SK-N-SH (cell line): ENCODE measurements at regions of chr20 and their contacts with region 1.

Region 1: DNA sequence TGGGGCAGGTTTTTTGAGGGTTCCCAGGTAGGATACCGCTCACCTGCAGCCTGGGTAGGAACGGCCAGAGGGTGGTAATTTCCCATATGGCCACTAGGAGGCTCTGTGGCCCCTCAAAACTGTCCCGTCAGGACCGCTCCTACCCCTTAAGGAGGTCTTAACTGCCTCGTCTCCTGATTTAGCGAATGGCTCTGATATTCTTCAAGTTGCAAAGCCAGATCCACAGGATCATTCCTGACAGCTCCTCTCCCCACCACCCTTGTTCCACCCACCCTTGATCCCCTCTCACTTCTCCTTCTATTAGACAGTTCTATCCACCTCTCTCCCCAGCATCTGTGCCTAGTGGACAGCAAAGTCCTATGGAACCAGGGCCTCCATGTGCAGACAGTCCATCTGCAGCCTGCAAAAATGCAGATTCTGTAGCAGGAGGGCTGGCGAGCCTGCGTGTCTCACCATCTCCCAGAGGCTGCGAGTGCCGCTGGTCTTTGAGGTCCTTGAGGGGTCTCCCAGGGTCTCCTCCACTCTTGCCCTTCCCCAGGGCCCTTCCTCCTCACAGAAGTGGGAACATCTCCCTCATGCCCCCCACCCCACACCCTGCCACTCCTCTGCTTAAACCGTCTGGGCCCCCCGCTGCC is 34.3 kb upstream of the ZBP1 start:
- DNase-seq: peak; percentile 93
- H3K4me3 ChIP-seq: no peak overlapping the region; a peak in 1 of 4 replicates
- H3K27ac ChIP-seq: peak overlapping the region in 1 of 2 experiments; percentile 17; a peak in 2 of 4 replicates
- H3K4me1 ChIP-seq: peaks cover 0 to 16% of the 10 kb centered on the region in 2 experiments; a peak in 1 of 4 replicates
- H3K27me3 ChIP-seq: no peaks in the 10 kb centered on the region
- CTCF ChIP-seq: peak; percentile 93
- EP300 ChIP-seq: no peak
- RAD21 ChIP-seq: peak; percentile 92

Region 2: DNA sequence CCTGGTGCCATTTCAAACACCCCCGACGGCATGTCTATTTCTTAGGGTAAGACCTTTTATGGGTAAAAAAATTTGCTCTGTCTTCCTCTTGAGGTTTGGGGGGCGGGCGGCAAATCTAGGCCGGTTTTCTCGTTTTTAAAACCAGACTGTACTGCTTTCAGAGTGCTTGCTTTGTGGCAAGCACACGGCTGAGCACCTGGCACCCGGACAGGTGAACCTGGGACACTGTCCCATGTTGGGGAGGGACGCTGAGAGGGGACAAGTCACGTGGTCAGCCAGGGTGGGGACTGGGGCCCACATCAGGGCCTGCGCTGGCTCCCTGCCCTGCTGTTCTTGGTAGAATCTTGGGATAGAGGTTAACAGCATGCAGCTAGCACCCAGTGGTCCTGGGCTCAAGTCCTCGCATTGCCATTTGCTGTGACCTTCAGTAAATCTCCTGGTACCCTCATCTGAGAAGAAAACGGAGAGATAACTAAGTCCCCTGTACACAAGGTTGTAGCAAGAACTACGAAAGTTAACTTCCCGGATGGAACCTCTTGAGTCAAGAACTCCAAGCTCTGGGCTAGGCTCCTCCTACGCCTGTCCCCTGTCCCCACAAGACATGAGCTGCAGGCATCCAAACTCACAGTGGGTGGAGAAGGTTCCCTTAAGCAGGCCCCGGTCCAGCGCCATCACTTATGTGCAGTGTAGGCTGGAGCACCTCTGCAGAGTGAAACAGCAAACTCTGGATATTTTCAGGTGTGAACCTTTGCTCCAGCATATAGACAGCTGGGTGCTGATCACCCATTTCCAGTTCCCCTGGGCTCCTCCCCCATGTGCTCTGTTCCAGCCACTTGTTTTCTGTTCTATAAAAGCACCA is 13.7 kb after region 1 on chr20:
- CTCF ChIA-PET with region 1: interaction called, 14 read pairs
- POLR2A ChIA-PET with region 1: no interaction called
- DNase-seq: no peak
- H3K4me3 ChIP-seq: no peak overlapping the region
- H3K27ac ChIP-seq: peak overlapping the region in 1 of 2 experiments; percentile 91; a peak in 2 of 4 replicates
- H3K4me1 ChIP-seq: peaks cover 0 to 79% of the 10 kb centered on the region in 2 experiments; a peak in 2 of 4 replicates
- H3K27me3 ChIP-seq: no peaks in the 10 kb centered on the region
- CTCF ChIP-seq: no peak
- EP300 ChIP-seq: no peak
- RAD21 ChIP-seq: no peak

Region 3: DNA sequence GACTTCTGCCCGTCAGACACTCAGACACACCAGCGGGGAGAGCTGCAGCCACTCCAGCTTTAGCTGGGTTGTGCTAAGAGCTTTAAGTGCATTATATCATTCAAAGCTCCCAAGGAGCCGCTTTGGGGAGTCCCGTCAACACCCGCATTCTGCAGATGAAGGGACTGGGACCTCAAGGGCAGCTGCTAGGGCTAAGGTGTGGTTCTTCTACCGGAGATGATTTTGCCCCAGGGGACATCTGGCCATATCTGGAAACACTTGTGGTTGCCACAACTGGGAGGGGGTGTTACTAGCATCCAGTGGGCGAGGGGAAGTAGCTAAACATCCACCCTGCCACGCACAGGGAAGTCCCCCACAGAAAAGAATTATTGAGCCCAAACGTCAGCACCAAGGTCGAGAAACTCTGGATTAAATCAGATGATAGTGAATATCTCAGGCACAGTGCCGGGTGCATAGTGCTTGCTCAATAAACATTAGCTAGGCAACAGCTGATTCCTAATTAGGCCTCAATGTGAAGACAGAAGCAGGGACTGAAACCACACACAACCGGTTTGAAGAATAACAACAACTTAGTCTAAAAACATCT is 25.7 kb after region 1 on chr20:
- CTCF ChIA-PET with region 1: interaction called, 19 read pairs
- POLR2A ChIA-PET with region 1: no interaction called
- DNase-seq: no peak
- H3K4me3 ChIP-seq: no peak overlapping the region
- H3K27ac ChIP-seq: peak overlapping the region in 1 of 2 experiments; percentile 94; a peak in 2 of 4 replicates
- H3K4me1 ChIP-seq: peaks cover 7 to 98% of the 10 kb centered on the region in 2 experiments; a peak in 2 of 4 replicates
- H3K27me3 ChIP-seq: no peaks in the 10 kb centered on the region
- CTCF ChIP-seq: no peak
- EP300 ChIP-seq: no peak
- RAD21 ChIP-seq: no peak

Region 4: DNA sequence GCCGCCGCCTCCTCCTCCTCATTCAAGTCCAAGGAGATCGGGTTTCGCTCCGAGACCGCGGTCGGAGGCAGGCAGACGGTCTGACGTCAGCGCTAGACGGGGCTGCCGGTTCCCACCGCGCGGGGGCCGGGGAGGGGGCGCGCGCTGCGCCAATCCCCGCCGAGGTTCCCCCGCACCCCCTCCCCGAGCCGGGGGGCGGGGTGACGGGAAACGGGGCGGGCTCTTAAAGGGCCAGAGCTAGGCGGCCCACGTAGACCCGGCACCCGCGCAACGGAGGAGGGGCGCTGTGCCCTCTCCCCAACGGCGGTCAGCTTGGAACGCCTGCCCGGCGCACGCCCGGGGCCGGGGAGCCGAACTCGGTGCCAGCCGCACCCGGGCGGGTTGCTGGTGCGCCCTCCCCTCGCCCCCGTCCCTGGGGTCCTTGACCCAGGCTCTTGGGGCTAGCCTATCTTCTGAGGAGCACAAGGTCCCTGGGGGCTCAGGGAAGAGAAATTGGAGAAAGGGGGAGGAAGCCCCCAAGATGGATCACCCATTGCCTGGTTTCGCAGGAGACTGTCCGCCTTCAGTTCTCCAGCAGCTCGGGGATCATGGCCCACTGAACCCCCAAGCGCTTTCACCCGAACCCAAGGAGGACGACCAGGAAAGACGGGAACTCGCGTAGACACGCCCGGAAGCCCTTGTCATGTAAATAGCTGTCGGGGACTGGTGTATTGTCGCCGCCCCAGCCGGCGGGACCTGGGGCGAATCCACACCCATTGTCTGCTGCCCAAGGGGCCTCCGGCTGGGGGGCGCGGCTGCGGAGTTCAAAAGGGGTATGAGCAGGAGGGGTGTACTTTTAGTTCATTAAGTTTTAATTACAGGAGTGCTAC is 55.7 kb after region 1 on chr20 and contains the start of gene PMEPA1:
- CTCF ChIA-PET with region 1: interaction called, 10 read pairs
- POLR2A ChIA-PET with region 1: interaction called, 3 read pairs
- DNase-seq: peak; percentile 99
- H3K4me3 ChIP-seq: peak within 1 kb of the TSS; percentile 96 to 99
- H3K27ac ChIP-seq: peak within 1 kb of the TSS; percentile 82 to 92
- H3K4me1 ChIP-seq: peaks cover 21 to 51% of the 10 kb centered on the region in 2 experiments; a peak in 3 of 4 replicates
- H3K27me3 ChIP-seq: no peaks in the 10 kb centered on the region
- CTCF ChIP-seq: no peak
- EP300 ChIP-seq: peak; percentile 24 to 28; a peak in 1 of 4 replicates
- RAD21 ChIP-seq: no peak; the same call in 1 of the 2 replicates
- polyA plus RNA-seq, gene PMEPA1: 5.9 and 7.1 TPM in 2 replicates